AG04450 (cell line): ENCODE measurements at regions of chrX and their contacts with region 1.

Region 1: DNA sequence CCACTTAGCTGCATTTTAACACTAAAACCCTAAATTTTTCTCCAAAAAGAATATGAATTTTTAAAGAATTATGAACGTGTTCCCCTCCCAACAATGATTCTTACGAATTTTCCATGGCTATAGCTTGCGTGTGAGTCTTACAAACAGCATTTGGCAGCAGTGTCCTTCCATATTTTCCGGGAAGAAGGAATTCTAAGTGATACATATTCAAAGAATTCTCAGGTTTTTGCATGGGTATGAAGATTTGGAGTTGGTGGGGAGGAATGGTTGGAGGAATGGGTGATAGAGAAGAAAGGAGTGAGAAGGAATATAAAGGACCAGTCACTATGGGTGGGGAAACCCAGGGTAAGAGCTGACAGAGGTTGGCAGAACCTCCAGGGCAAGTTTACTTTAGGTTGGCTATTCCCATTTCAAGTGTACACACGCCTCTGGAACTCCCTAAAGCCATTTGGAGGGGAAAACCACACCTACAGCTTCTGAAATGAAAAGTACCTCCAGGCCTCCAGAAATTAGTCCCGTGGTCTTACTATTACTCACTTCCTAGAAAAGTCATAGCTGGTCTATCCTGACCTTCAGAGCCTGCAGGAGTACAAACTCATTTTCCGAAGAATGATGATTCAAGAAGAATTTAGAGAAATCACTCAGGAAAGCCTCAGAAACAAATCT is 420.8 kb upstream of the DIPK2B start:
- DNase-seq: no peak
- H3K4me3 ChIP-seq: no peak overlapping the region
- H3K27ac ChIP-seq: peak overlapping the region; percentile 85
- H3K27me3 ChIP-seq: no peaks in the 10 kb centered on the region
- CTCF ChIP-seq: no peak

Region 2: GRCh38 chrX:45508454-45508853 is 113.1 kb before region 1 on chrX:
- CTCF ChIA-PET with region 1: interaction called, 13 read pairs
- POLR2A ChIA-PET with region 1: no interaction called
- DNase-seq: no peak
- H3K4me3 ChIP-seq: no peak overlapping the region
- H3K27ac ChIP-seq: no peak overlapping the region
- H3K27me3 ChIP-seq: no peaks in the 10 kb centered on the region
- CTCF ChIP-seq: no peak

Region 3: DNA sequence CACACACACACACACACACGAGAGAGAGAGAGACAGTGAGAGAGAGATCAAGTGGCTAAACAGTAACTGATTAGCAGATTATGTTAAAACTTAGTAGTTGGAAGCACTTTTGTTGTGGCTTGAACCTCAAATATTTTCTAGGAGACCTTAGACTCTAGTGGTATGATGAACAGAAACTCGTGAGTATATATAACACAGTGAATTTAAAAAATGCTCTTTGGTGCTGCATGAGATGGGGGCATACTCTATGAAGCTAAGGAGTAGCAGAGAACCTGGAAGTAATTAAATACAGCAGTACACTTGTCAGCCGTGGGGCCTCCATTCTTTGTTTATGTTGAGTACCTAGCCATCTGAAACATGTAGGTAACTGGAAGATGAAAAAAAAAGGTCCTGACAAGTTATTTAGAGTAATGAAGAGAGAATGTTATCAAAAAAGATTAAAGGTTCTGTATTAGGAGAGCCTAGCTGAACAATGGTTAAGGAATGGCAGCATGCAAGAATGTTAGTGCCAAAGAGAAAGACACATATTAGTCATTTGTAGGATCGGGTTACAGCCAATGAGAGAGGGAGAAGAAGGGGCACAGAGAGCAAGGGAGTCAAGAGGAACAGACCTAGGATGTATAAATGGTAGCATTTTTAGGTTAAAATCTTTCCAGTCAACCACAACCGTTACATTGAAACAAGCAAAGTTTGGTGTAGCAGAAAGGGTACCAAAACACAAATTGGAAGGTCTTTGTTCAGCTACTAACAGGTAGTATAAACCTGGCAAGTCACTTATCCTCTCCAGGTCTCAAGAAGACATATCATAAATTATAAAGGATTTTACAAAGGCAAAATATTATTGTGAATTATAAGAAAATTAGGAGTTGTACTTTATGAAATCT is 104.2 kb before region 1 on chrX:
- CTCF ChIA-PET with region 1: no interaction called
- POLR2A ChIA-PET with region 1: interaction called, 11 read pairs
- DNase-seq: peak; percentile 42
- H3K4me3 ChIP-seq: no peak overlapping the region
- H3K27ac ChIP-seq: peak overlapping the region; percentile 55
- H3K27me3 ChIP-seq: no peaks in the 10 kb centered on the region
- CTCF ChIP-seq: no peak